ENCODE measurements at regions of chr1 and their contacts with region 1.

Region 1: DNA sequence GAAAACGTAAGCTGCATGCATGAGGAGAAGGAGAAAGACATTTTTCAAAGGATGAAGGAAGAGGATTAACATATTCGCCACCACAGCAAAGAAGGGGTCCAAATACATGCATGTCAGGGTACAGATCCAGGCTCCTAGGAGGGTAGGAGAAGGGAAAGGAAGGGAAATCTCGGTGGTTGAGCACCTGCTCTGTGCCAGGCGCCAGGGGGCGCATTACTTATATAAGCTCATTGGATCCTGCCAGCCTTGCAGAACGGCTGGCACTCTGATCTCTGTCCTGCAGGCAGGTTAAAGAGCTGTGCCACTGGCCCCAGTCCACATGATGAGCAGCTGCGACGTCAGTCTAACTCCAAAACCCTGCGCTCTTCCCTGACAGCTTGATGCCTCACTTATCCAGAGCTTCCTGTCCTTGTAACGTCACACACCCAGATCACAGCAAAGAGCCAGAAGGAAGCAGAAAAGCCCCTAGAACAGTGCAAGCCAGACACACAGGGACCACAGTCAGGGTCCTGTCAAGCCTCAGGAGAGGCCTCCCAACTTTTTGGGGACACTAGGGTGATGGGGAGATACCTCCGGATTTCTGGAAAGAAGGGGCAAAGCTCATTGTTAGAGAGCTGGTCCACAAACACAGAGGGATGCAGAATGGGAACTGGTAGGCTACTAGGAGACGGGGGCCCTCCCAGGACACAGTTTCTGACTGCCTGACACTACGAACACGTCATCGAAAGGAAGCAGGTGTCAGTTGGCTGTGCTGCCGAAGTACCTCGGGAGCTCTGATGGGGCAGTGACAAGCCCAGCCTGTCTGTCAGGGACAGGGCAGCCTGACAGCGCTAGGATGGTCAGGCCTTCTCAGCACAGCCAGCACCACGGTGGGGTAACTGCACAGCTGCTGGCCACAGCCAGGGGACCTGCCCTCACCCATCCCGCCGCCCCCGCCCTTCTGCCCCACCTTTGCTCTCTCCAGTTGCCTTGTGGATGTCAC is 99.1 kb downstream of the BEND5 start:
- DNase-seq: peak; percentile 23
- H3K4me3 Mint-ChIP-seq: no peak overlapping the region
- H3K27ac Mint-ChIP-seq: no peak overlapping the region
- H3K4me1 Mint-ChIP-seq: no peaks in the 10 kb centered on the region
- H3K27me3 Mint-ChIP-seq: peaks cover 4% of the 10 kb centered on the region

Region 2: DNA sequence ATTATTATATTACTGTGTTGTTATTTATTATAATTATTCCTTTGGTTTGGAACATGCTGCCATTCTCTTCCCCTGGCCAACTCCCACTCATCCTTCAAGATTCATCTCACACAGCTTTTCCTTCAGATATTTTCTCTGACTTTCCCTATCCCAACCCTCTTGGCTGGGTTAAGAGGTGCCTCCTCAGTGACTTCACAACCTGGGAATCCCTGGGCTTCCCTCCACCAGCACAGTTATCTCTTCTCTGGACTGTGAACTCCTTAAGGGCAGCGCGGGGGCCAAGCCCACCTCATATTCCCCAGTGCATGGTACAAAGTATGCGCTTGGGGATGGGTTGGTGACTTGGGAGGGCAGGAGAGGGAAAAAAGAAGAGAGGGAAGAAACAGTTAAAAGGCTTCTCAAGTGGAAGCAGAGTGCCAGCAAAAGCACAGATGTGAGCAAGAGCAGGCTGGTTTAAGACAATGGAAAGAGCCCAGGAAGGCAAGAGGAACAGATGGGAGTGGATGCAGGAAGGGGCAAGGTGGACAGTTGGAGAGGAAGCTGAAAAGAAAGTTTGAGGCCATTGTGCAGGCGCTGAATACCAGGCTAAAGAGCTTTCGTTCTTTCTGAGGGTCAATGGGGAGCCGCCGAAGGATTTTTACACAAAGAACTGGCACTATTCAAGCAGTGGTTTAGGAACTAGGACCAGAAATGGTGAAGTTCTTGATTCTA is 33.3 kb before region 1 on chr1:
- CTCF ChIA-PET with region 1: no interaction called
- POLR2A ChIA-PET with region 1: no interaction called
- DNase-seq: no peak
- H3K4me3 Mint-ChIP-seq: no peak overlapping the region
- H3K27ac Mint-ChIP-seq: no peak overlapping the region
- H3K4me1 Mint-ChIP-seq: no peaks in the 10 kb centered on the region
- H3K27me3 Mint-ChIP-seq: no peaks in the 10 kb centered on the region

Region 3: DNA sequence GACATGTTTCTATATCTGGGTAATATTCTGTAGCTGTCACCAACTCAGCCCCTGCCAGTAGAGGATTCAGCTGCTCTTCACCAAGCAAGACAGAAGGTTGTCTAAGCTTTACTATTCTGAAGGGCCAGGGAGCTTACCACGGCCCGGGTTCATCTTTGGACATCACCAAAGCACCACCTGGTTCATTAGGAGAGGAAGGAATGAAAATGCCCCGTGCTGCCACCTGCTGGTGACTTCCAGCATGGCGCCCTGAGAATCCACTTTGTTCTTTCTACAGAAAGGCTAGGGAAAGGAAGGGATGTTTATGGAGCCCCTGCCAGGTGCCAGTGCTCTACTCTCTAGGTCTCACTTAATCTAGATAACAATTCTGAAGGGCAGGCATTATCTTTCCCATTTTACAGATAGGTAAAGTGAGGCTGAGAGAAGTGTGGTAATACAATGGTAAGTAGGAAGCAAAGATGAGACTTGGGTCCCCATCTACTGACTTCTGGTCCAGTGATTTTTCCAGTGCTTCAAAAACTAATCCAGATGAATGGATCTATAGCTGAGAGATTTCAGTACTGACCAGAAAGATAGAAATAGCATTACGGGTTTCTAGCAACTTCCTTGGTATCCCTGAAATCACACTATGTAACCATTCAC is 19.6 kb after region 1 on chr1:
- CTCF ChIA-PET with region 1: interaction called, 17 read pairs
- POLR2A ChIA-PET with region 1: no interaction called
- DNase-seq: peak; percentile 53
- H3K4me3 Mint-ChIP-seq: no peak overlapping the region
- H3K27ac Mint-ChIP-seq: no peak overlapping the region
- H3K4me1 Mint-ChIP-seq: no peaks in the 10 kb centered on the region
- H3K27me3 Mint-ChIP-seq: no peaks in the 10 kb centered on the region

Region 4: GRCh38 chr1:48817505-48818114 is 140.0 kb after region 1 on chr1:
- CTCF ChIA-PET with region 1: interaction called, 14 read pairs
- POLR2A ChIA-PET with region 1: no interaction called
- DNase-seq: peak; percentile 16
- H3K4me3 Mint-ChIP-seq: no peak overlapping the region
- H3K27ac Mint-ChIP-seq: no peak overlapping the region
- H3K4me1 Mint-ChIP-seq: no peaks in the 10 kb centered on the region
- H3K27me3 Mint-ChIP-seq: no peaks in the 10 kb centered on the region

Measured in activated CD4-positive, alpha-beta memory T cell treated with anti-CD3 and anti-CD28 coated beads, Interleukin-2, amount 10 ng/mL, durations not matched to agents 7 days and 5 days (primary cell).